ENCODE measurements at regions of chr14 and their contacts with region 1.

Region 1: DNA sequence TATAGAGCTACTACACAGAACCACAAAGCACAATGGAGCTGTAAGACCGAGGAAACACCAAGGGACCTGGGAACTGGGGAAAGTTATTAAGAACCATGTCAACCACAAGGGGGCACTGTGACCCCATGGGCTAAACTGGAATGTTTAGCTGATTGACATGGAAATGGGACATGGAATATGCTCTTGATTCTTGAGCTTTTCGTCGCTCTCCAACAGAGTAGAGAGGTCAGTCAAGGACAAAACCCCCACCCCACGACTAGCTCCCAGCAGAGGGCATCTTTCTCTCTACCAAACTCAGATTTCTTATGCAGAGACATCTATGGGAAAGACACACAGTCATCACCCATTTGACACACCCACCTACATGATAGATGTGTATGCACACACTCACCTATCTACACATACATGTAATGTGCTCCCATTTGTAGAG is 10.1 kb downstream of the NDRG2 start:
- DNase-seq: peak; percentile 77 to 89
- ATAC-seq: peak; percentile 84

Region 2: GRCh38 chr14:20970983-20971704 is 43.6 kb before region 1 on chr14:
- intact Hi-C with region 1: no loop called
- DNase-seq: peak; percentile 75 to 81
- ATAC-seq: peak; percentile 97

Region 3: GRCh38 chr14:21054123-21054767 is 39.5 kb after region 1 on chr14:
- intact Hi-C with region 1: loop called in 1 of 2 experiments (anchors 5 kb)
- DNase-seq: peak; percentile 49 to 70
- ATAC-seq: peak; percentile 68

Region 4: DNA sequence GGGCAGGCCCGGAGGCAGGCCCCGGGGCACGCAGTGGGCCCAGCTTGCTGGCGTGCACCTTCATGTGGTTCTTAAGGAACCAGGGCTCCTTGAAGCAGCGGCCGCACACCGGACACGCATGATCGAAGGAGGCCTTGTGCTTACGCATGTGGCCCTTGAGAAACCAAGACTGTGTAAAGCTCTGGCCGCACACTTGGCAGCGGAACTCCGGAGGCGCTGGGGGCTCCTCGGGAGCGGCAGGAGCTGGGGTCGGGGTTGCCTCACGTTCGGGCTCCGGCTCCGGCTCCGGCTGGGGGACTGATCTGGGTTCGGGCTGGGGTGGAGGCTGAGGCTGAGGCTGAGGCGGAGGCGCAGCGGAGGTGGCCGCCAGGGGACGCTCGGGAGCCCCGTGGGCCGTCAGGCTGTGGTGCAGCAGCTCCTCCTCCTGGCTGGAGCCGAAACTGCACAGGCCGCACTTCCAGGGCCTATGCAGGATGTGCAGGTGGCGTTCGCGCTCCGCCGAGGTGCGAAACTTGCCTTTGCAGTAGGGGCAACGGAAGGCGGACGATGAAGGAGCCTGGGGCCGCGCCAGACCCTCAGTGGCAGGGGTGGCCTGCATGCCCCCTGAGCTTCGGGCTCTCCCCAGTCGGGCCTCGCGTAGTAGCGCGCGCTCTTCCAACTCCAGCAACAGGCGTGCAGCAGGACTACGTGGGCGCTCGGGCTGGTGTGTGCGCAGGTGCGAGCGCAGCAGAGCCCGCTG is 77.7 kb after region 1 on chr14:
- intact Hi-C with region 1: loop called in 1 of 2 experiments (anchors 10 kb)
- DNase-seq: peak; percentile 76 to 93
- ATAC-seq: peak; percentile 68

Region 5: DNA sequence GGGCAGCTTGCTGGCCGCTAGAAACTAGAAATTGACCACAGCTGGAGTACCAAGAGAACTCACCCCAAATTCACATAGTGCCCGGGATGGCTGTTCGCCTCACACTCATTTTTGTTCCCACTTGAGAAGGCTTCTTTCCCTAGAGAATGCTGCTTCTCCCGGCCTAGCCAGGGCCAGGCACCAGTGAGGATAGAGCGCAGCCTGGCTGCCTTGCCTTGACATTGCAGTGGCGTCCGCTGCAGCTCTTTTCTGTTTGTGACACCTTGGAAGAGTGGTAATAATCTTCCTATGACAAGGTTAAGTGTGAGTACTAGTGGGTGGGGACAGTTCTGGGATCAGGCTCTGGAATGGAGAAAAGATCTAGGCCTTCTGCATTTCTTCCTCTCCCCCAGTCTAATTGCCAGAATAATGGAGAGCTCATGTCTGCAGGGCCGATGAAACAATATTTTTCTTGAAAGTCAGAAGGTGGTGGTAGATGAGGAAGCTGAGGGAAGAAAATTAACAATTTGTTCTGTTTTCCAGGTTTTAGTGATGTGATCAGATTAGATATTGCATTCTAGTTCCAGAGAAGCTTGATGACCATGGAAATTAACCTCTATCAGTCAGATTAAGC is 89.8 kb after region 1 on chr14:
- intact Hi-C with region 1: loop called (anchors 5 to 10 kb)
- DNase-seq: peak; percentile 84
- ATAC-seq: peak; percentile 62

Region 6: DNA sequence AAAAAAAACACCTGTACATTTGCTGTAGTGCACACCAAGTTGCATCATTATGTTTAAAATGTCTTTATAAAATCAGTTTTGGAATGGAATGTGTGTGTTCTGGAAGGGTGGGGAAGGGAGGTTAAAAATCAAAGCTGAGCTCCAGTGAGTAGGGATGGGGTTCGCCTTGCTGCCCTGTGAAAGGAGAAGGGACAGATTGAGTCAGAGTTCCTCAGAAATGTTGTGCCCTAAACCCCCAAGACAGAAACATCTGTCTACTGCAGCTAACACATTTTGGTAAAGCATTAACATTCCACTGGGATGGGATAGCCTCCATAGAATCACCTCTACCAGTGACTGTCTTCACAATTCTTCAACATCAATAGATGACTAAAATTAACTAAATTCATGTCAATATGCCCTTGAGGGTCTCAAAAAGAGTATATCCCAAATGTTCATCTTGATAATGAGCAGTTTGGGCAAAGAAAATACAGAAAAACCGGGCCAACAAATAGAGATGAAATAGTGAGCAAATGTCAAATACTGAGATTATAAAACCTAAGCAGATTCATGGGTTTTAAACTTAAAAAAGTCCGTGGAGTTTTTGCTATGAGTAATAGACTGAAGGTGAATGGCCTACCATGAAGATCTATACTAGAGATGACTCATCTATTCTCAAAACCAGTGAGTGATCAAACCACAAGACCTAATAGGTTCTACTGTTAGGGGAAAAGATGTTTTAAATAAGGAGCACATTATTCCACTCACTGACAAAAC is 249.1 kb after region 1 on chr14:
- intact Hi-C with region 1: no loop called
- DNase-seq: no peak
- ATAC-seq: no peak

Measured in left colon (tissue), 2 donors.